Activated naive CD4-positive, alpha-beta T cell treated with anti-CD3 and anti-CD28 coated beads for 36 hours (primary cell): ENCODE measurements at regions of chr12 and their contacts with region 1.

Region 1: GRCh38 chr12:108664338-108665258 is 30.9 kb upstream of the SELPLG start:
- DNase-seq: peak; percentile 95
- H3K4me3 Mint-ChIP-seq: peak overlapping the region; percentile 41
- H3K27ac Mint-ChIP-seq: peak overlapping the region; percentile 74
- H3K4me1 Mint-ChIP-seq: peaks cover 30% of the 10 kb centered on the region
- H3K27me3 Mint-ChIP-seq: no peaks in the 10 kb centered on the region

Region 2: DNA sequence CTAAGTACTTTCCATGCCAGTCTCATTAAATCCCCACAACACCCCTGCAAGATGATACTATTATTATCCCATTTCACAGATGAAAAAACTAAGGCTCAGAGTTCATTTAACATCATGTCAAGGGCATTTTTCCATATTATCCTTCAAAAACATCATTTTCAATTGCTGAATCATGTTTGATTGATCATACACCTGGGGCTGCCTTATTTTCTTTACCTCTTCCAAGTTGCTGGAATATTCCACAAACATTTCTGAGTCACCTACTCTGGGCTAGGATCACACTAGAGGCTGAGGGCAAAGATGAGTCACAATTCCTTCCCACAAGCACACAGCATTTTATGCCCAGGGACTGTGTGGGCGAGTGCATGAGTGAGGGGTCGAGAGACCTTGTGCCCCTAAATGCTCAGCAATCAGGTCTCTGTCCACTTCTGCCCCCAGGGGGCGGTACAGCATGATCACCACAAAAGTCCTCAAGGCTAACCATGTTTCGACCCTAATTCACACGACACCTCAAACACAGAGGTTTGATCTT is 52.6 kb before region 1 on chr12:
- CTCF ChIA-PET with region 1: interaction called, 4 read pairs
- intact Hi-C with region 1: loop called (anchors 1 kb)
- DNase-seq: peak; percentile 66
- H3K4me3 Mint-ChIP-seq: no peak overlapping the region
- H3K27ac Mint-ChIP-seq: no peak overlapping the region
- H3K4me1 Mint-ChIP-seq: peaks cover 19% of the 10 kb centered on the region
- H3K27me3 Mint-ChIP-seq: no peaks in the 10 kb centered on the region

Region 3: DNA sequence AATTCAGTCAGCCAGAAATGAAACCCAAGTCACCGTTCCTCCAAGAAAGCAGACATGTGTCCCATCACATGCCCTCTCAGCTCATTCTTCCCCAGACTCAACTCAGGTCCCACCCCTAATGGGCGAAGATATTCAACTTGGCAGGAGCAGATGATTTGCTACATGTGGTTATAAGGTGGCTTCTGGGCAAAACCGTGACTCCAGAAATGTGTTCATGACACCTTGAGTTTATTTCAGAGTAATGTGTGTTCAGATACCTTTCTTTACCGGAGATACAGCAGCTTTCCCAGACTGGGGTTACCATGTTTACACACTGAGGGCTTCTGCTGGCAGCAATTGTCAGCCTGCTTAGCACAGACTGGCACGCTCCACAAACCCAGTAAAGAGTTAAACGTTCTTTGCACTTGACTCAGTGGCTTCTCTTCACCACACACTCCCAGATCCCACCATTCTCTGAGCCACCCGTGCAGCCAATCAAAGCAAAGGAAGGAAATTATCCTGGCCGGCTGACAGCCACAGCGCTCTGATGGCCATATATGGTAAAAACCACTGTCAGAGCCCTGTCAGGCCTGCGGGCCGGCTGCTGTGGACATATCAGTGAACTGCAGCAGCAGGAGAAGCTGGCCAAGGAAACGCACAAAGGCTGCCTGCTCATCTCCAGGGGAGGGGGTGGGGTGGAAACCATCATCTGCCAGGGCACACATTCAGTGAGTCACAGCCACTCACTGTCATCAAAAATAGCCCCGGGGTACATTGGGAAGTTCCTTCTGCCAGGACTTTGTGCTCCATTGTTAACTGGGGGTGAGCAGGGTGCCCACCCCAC is 26.8 kb after region 1 on chr12:
- CTCF ChIA-PET with region 1: interaction called, 71 read pairs
- intact Hi-C with region 1: loop called (anchors 1 kb)
- DNase-seq: peak; percentile 92
- H3K4me3 Mint-ChIP-seq: peak overlapping the region; percentile 55
- H3K27ac Mint-ChIP-seq: peak overlapping the region; percentile 80
- H3K4me1 Mint-ChIP-seq: peaks cover 77% of the 10 kb centered on the region
- H3K27me3 Mint-ChIP-seq: peaks cover 2% of the 10 kb centered on the region

Region 4: DNA sequence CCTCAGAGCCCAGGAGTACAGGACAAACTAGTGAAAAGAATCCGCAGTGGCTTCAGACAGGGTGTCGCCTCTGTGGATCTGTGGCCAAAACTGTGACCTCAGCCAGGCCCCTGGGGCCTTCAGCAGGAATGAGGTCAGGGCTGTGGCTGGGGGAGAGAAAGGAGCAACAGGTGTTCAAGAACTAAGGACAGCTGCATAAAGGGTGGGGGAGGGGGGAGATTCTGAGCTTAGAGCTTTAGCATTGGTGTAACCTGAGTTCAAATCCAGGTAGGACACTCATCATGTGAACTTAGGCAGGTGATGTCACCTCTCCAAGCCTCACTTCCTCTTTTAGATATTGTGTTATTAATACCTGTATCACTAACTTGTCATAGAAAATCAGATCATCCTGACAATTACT is 107.6 kb after region 1 on chr12:
- CTCF ChIA-PET with region 1: interaction called, 15 read pairs
- intact Hi-C with region 1: no loop called
- DNase-seq: no peak
- H3K4me3 Mint-ChIP-seq: no peak overlapping the region
- H3K27ac Mint-ChIP-seq: no peak overlapping the region
- H3K4me1 Mint-ChIP-seq: no peaks in the 10 kb centered on the region
- H3K27me3 Mint-ChIP-seq: peaks cover 6% of the 10 kb centered on the region

Region 5: DNA sequence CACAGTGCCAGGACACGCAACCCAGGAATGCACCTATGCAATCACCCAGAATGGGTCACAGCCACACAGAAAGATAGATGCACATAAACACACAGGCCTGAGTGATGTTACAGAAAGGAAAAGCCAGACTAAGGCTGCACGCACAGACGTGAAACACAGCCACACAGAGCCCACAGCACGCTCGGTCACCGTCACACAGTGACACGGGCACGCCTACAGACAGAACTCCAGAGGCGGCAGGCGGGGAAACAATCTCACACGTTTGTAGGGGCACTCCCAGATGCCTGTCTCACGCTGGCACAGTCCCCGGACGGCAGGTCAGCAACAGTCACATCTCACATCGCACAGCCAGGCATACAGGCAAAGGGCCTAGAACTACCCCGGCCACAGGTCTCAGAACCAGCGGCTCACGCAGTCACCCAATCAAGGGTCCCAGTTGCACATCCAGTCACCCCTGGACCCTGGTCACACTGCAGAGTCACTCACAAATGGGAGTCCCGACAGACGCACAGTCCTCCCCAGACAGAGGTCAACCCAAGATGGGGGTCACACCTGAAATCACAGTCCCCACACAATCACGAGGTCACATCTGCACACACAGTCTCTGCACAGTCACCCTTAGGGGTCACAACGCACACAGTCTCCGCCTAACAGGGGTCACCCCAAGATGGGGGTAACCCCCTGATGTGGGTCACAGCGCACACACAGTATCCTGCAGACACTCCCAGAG is 192.0 kb after region 1 on chr12:
- CTCF ChIA-PET with region 1: interaction called, 4 read pairs
- intact Hi-C with region 1: loop called (anchors 1 kb)
- DNase-seq: peak; percentile 74
- H3K4me3 Mint-ChIP-seq: peak overlapping the region; percentile 92
- H3K27ac Mint-ChIP-seq: peak overlapping the region; percentile 75
- H3K4me1 Mint-ChIP-seq: peaks cover 40% of the 10 kb centered on the region
- H3K27me3 Mint-ChIP-seq: no peaks in the 10 kb centered on the region

Region 6: DNA sequence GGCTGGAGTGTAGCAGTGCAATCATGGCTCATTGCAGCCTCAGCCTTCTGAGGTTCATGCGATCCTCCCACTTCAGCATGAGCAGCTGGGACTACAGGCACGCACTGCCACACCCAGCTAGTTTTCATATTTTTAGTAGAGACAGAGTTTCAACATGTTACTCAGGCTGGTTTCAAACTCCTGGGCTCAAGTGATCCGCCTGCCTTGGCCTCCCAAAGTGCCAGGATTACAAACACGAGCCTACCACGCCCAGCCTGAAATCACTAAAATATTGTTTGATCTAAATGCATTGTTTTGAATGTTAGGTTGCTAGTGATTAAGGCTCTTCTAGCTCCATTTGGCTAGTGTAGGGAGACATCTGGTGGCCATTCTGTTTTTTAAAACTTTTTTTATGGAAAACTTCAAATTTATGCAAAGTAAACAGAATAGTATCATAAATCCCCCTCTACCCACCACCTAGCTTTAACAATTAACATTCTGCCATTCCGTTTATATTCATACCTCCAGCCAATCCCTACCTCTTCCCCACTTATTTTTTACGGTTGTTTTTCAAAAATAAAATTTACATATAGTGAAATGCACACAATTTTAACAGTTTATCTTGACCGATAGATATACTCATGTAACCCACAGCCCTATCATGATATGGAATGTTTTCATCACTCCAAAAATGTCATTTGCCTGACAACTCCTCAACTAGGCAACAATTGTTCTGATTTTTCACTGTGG is 720.9 kb after region 1 on chr12:
- CTCF ChIA-PET with region 1: no interaction called
- intact Hi-C with region 1: loop called (anchors 5 kb)
- DNase-seq: peak; percentile 9
- H3K4me3 Mint-ChIP-seq: no peak overlapping the region
- H3K27ac Mint-ChIP-seq: no peak overlapping the region
- H3K4me1 Mint-ChIP-seq: no peaks in the 10 kb centered on the region
- H3K27me3 Mint-ChIP-seq: peaks cover 8% of the 10 kb centered on the region